HAP-1 (cell line): ENCODE measurements at regions of chr7 and their contacts with region 1.

Region 1: GRCh38 chr7:133853706-133854276 is 273.3 kb upstream of the LRGUK start:
- DNase-seq: peak; percentile 28 to 69
- H3K4me3 ChIP-seq: no peak overlapping the region
- H3K4me1 ChIP-seq: no peaks in the 10 kb centered on the region; the same call in none of the 2 replicates
- H3K27me3 ChIP-seq: no peaks in the 10 kb centered on the region

Region 2: GRCh38 chr7:133394369-133394768 is 459.4 kb before region 1 on chr7:
- in situ Hi-C with region 1: no loop called
- DNase-seq: no peak
- H3K4me3 ChIP-seq: no peak overlapping the region
- H3K4me1 ChIP-seq: peaks cover 3% of the 10 kb centered on the region; the same call in 1 of the 2 replicates
- H3K27me3 ChIP-seq: no peaks in the 10 kb centered on the region

Region 3: GRCh38 chr7:133983685-133984419 is 130.1 kb after region 1 on chr7:
- in situ Hi-C with region 1: loop called (anchors 25 kb)
- DNase-seq: peak; percentile 51 to 68
- H3K4me3 ChIP-seq: no peak overlapping the region
- H3K4me1 ChIP-seq: peaks cover 16% of the 10 kb centered on the region
- H3K27me3 ChIP-seq: no peaks in the 10 kb centered on the region

Region 4: GRCh38 chr7:134962270-134962780 is 1108.5 kb after region 1 on chr7:
- in situ Hi-C with region 1: no loop called
- DNase-seq: no peak
- H3K4me3 ChIP-seq: no peak overlapping the region
- H3K4me1 ChIP-seq: peaks cover 15% of the 10 kb centered on the region
- H3K27me3 ChIP-seq: no peaks in the 10 kb centered on the region